PC-9 (cell line): ENCODE measurements at regions of chr5 and their contacts with region 1.

Region 1: DNA sequence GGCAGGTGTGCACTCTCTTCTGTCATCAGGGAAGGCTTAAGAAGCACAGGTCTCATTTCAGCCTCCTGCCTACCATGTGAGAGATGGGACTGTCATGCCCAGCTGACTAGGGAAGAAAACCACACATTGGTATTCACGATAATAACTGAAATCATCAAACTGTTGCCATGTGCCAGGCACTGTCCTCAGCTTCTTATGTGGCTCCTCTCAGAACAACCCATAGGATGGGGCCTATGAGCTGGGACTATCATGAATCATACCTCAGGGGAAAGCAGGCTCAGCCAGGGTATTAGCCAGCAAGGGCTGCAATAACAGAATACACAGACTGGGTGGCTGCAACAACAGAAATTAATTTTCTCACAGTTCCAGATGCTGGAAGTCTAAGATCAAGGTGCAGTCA is 3.3 kb downstream of the AFAP1L1 start:
- DNase-seq: no peak
- H3K4me3 ChIP-seq: no peak overlapping the region
- H3K27ac ChIP-seq: no peak overlapping the region
- H3K4me1 ChIP-seq: peaks cover 28% of the 10 kb centered on the region
- H3K27me3 ChIP-seq: no peaks in the 10 kb centered on the region
- CTCF ChIP-seq: no peak

Region 2: DNA sequence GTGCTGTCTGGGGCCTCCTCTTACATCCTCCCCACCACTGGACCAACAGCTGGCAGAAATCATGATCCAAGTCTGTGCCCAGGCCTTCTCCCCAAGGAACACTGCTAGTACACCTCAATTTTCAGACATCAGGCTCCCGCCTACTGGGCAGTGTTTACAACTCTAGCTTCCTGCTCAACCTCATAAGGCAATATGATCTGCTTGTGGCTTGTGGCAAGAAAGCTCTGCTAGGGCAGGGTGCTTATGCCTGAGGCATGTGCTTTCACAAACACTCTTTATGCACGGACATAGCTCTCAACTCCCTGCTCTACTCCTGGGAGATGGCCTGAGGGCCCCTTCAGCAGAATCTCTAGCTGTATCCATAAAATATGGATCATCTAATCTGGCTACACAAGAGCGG is 244.5 kb before region 1 on chr5:
- CTCF ChIA-PET with region 1: no interaction called
- POLR2A ChIA-PET with region 1: no interaction called
- intact Hi-C with region 1: no loop called
- DNase-seq: peak; percentile 55 to 88
- H3K4me3 ChIP-seq: no peak overlapping the region
- H3K27ac ChIP-seq: peak overlapping the region; percentile 78
- H3K4me1 ChIP-seq: peaks cover 37% of the 10 kb centered on the region
- H3K27me3 ChIP-seq: no peaks in the 10 kb centered on the region
- CTCF ChIP-seq: no peak

Region 3: GRCh38 chr5:149310947-149311658 is 36.2 kb after region 1 on chr5:
- CTCF ChIA-PET with region 1: no interaction called
- POLR2A ChIA-PET with region 1: no interaction called
- intact Hi-C with region 1: no loop called
- DNase-seq: no peak
- H3K4me3 ChIP-seq: no peak overlapping the region
- H3K27ac ChIP-seq: no peak overlapping the region
- H3K4me1 ChIP-seq: no peaks in the 10 kb centered on the region
- H3K27me3 ChIP-seq: no peaks in the 10 kb centered on the region
- CTCF ChIP-seq: no peak

Region 4: DNA sequence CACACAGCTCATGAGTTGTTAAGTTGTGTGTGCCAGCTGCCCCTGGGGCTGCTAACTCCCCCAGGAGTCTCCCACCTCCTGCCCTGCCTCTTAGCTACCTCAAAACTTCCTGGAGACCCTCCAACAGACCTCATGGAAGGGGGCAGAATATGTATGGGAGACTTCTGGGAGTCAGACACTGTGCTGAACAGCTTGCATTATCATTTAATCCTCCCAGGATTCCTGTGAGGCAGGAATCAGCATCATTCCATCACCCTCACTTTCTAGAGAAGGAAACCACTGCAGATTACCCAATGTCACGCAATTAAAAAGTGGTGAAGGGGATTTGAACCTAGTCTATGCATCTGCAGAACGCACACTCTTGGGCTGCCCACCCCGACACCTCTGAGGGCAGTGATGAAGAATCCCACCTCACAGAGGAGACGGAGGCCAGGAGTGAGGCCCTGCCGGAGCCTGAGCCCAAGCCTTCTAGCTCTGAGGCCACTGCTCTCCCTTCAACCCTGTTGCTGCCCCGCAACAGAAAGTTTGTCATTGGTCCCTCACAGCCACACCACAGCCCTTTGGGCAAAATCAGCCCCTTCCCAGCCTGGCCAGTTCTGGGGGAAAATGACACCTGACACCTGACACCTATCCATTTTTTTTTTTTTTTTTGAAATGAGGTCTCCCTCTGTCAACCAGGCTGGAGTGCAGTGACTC is 134.5 kb after region 1 on chr5:
- CTCF ChIA-PET with region 1: interaction called, 11 read pairs
- POLR2A ChIA-PET with region 1: no interaction called
- intact Hi-C with region 1: no loop called
- DNase-seq: peak in 1 of 2 experiments; percentile 29
- H3K4me3 ChIP-seq: no peak overlapping the region
- H3K27ac ChIP-seq: no peak overlapping the region
- H3K4me1 ChIP-seq: peaks cover 9% of the 10 kb centered on the region
- H3K27me3 ChIP-seq: no peaks in the 10 kb centered on the region
- CTCF ChIP-seq: no peak